Activated CD4-positive, alpha-beta T cell treated with anti-CD3 and anti-CD28 coated beads for 36 hours (primary cell): ENCODE measurements at regions of chr1 and their contacts with region 1.

Region 1: DNA sequence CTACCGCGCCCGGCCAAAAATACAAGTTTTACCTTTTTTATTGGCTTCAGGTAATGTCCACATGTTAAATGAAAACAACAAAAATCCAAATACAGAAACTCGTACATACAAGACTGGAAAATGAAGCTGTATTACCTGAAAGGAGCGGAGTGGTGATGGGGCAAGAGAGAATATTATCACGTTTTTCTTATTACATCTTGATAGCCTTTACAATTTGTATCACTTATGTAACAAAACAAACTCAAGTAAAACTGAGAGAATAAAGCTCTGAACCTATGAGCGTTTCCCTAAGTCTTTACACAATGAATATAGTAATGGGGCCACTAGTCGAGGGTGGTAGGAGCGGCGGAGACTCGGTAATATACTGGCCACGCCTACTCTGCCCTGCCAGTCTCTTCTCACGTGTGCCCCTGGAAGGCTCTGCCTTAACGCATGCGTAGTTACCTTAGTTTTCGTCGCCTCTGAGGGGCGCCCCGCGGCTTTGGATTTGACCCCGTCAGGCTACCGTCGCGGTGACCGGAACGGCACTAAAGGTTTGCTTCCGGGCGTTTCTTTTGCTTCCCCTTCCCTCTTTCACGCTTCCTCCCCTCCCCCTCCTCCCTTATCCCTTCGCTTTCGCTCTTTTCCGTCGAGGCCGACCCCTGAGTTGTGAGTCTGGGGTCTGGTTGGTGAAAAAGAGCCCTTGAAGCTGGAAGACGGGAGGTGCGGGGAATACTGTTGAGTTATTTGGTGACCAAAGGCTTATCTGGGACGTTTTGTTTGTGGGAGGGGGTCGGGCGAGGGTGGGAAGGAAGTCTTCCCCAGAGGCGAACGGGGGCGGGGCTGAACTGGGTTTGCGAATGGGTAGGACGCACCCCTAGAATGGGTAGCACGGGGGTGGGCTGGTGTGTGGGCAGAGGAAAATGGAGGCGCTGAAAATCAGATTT is at the start of gene SETDB1:
- DNase-seq: peak; percentile 97
- ATAC-seq: peak; percentile 89
- H3K4me3 Mint-ChIP-seq: peak within 1 kb of the TSS; percentile 89
- H3K27ac Mint-ChIP-seq: peak within 1 kb of the TSS; percentile 96
- H3K4me1 Mint-ChIP-seq: peaks cover 29% of the 10 kb centered on the region
- H3K27me3 Mint-ChIP-seq: no peaks in the 10 kb centered on the region
- total RNA-seq, gene SETDB1: 48.8 to 52.7 TPM

Region 2: GRCh38 chr1:150138044-150138443 is 788.0 kb before region 1 on chr1:
- CTCF ChIA-PET with region 1: no interaction called
- POLR2A ChIA-PET with region 1: no interaction called
- intact Hi-C with region 1: no loop called
- DNase-seq: no peak
- ATAC-seq: no peak
- H3K4me3 Mint-ChIP-seq: no peak overlapping the region
- H3K27ac Mint-ChIP-seq: no peak overlapping the region
- H3K4me1 Mint-ChIP-seq: peaks cover 3% of the 10 kb centered on the region
- H3K27me3 Mint-ChIP-seq: no peaks in the 10 kb centered on the region

Region 3: DNA sequence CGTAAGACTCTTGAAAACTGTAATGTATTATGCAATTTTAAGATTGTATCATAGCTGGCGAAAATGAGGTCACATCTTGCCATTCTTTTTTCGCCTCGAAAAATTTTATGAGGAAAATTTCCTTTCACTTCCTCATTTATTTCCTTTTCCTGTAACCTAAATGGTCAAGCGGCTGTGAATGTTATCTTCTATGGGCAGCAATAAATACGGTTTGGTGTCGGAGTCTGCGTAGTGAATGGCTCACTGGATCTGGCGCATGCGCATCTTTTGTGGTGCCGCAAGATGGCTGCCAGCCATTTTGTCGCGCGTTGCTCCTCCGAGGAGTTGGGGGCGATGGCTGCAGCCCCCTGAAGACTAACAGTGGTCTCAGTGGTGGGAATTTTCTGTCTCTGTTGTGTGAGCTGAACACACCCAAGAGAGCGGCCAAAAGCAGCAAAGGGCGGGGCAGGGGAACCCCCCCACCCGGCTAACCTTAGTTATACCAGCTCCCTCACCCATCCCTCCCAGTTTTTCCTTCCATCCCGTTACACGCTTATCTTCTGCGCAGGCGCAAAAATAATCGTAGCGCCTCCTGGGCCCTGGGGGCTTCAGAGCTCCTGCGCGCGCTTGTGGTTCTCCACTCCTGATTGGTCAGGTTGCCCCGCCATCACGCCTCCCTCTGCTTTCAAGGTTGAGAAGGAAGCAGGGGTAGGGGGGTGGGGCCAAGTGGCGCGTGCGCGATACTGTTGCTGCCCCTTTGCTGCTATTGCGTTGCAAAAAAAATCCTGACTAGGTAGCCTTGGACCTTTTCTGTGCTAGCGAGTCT is 562.5 kb before region 1 on chr1 and contains the start of gene RPRD2:
- CTCF ChIA-PET with region 1: no interaction called
- POLR2A ChIA-PET with region 1: no interaction called
- intact Hi-C with region 1: loop called in 1 of 2 experiments (anchors 2 kb)
- DNase-seq: peak; percentile 99
- ATAC-seq: peak; percentile 95
- H3K4me3 Mint-ChIP-seq: peak within 1 kb of the TSS; percentile 91
- H3K27ac Mint-ChIP-seq: peak within 1 kb of the TSS; percentile 99
- H3K4me1 Mint-ChIP-seq: peaks cover 13% of the 10 kb centered on the region
- H3K27me3 Mint-ChIP-seq: no peaks in the 10 kb centered on the region
- total RNA-seq, gene RPRD2: 24.4 to 32.2 TPM

Region 4: DNA sequence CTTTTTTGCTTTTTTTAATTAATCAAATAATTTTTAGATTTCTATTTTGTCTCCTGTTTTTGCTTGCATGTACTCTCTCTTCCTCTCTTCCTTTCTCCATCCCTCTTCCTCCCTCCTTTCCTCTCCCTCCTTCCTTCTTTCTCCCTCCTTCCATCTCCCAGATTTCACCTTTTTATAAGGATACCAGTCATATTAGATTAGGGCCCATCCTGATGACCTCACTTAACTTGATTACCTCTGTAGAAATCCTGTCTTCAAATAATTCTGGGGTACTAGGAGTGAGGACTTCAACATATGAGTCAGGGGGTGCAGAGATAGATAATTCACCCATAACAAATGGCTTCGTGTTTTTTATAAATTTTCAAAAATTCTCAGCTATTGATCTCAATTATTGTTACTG is 476.6 kb before region 1 on chr1:
- CTCF ChIA-PET with region 1: no interaction called
- POLR2A ChIA-PET with region 1: no interaction called
- intact Hi-C with region 1: no loop called
- DNase-seq: no peak
- ATAC-seq: no peak
- H3K4me3 Mint-ChIP-seq: no peak overlapping the region
- H3K27ac Mint-ChIP-seq: peak overlapping the region; percentile 69
- H3K4me1 Mint-ChIP-seq: peaks cover 5% of the 10 kb centered on the region
- H3K27me3 Mint-ChIP-seq: no peaks in the 10 kb centered on the region

Region 5: GRCh38 chr1:150629115-150629928 is 296.8 kb before region 1 on chr1 and contains the start of gene ENSA:
- CTCF ChIA-PET with region 1: interaction called, 3 read pairs
- POLR2A ChIA-PET with region 1: interaction called, 4 read pairs
- intact Hi-C with region 1: loop called (anchors 1 to 5 kb)
- DNase-seq: peak; percentile 97
- ATAC-seq: peak; percentile 89
- H3K4me3 Mint-ChIP-seq: no peak within 1 kb of the TSS
- H3K27ac Mint-ChIP-seq: no peak within 1 kb of the TSS
- H3K4me1 Mint-ChIP-seq: peaks cover 29% of the 10 kb centered on the region
- H3K27me3 Mint-ChIP-seq: no peaks in the 10 kb centered on the region
- total RNA-seq, gene ENSA: 197 to 240 TPM

Region 6: DNA sequence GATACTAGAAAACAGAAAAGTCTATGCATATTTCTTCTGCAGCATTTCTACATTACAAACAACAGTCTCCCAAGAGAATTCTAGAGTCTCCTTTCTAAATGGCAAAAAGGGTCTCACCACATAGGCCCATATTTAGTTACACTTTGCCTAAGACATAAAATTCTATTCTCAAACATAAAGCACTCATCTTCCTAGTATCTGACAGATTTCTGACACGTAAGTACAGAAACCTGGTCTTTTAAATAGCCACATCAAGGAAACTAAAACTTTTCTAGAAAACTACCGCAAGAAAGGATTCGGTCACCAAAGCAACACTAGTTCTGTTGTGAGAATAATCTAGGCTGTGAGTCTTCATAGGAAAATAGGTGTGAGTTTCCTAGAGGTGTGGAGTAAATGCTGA is 84.5 kb before region 1 on chr1:
- CTCF ChIA-PET with region 1: interaction called, 5 read pairs
- POLR2A ChIA-PET with region 1: no interaction called
- intact Hi-C with region 1: loop called (anchors 1 kb)
- DNase-seq: no peak
- ATAC-seq: peak; percentile 91
- H3K4me3 Mint-ChIP-seq: peak overlapping the region; percentile 2
- H3K27ac Mint-ChIP-seq: peak overlapping the region; percentile 21
- H3K4me1 Mint-ChIP-seq: peaks cover 33% of the 10 kb centered on the region
- H3K27me3 Mint-ChIP-seq: no peaks in the 10 kb centered on the region

Region 7: DNA sequence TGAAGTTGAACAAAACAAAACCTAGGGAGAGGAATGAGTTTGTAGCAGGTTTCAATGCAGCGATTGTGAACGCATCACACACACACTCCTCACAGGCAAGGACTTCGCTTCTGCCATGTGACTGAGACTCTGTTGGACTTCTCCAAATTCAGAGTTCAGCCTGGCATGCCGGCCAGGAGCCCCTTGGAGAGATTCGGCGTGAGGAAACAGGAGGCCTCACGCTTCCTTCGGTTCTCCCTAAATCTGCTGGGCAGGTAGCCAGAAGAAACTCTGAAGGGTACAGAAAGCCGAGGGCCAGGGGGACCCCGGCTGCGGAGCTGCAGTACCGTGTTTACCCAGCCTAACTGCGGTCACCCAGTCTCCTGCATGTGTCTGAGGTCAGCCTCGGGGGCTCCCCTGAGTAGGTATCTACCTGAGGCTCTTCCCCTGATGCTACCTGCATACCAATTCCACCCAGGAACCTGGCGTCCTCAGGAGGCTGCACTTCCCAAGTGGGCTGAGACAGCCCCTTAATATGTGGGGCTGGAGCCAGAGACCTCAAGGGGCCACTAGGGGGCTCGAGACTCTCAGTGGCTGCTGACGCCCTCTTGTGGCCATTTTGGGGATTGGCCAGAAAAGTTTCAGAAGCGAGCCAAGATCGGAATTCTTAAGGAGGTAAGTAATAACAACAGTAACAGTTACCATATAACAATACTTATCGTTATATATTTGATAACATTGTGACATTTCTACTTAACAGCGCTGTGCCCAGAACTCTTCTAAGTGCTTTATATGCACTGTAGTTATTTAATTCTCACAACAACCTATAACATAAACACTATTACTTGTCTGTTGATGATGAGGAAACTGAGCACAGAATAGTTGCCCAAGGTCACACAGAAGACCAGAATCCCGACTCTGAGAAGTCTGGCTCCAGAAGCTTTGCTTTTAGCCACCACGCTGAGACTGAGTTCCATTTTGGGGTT is 53.3 kb after region 1 on chr1:
- CTCF ChIA-PET with region 1: interaction called, 7 read pairs
- POLR2A ChIA-PET with region 1: no interaction called
- intact Hi-C with region 1: loop called in 1 of 2 experiments (anchors 1 kb)
- DNase-seq: peak; percentile 94
- ATAC-seq: peak; percentile 53
- H3K4me3 Mint-ChIP-seq: no peak overlapping the region
- H3K27ac Mint-ChIP-seq: peak overlapping the region; percentile 63
- H3K4me1 Mint-ChIP-seq: peaks cover 39% of the 10 kb centered on the region
- H3K27me3 Mint-ChIP-seq: no peaks in the 10 kb centered on the region

Region 8: GRCh38 chr1:151098126-151098525 is 172.0 kb after region 1 on chr1:
- CTCF ChIA-PET with region 1: no interaction called
- POLR2A ChIA-PET with region 1: no interaction called
- intact Hi-C with region 1: no loop called
- DNase-seq: no peak
- ATAC-seq: no peak
- H3K4me3 Mint-ChIP-seq: no peak overlapping the region
- H3K27ac Mint-ChIP-seq: no peak overlapping the region
- H3K4me1 Mint-ChIP-seq: no peaks in the 10 kb centered on the region
- H3K27me3 Mint-ChIP-seq: no peaks in the 10 kb centered on the region

Region 9: DNA sequence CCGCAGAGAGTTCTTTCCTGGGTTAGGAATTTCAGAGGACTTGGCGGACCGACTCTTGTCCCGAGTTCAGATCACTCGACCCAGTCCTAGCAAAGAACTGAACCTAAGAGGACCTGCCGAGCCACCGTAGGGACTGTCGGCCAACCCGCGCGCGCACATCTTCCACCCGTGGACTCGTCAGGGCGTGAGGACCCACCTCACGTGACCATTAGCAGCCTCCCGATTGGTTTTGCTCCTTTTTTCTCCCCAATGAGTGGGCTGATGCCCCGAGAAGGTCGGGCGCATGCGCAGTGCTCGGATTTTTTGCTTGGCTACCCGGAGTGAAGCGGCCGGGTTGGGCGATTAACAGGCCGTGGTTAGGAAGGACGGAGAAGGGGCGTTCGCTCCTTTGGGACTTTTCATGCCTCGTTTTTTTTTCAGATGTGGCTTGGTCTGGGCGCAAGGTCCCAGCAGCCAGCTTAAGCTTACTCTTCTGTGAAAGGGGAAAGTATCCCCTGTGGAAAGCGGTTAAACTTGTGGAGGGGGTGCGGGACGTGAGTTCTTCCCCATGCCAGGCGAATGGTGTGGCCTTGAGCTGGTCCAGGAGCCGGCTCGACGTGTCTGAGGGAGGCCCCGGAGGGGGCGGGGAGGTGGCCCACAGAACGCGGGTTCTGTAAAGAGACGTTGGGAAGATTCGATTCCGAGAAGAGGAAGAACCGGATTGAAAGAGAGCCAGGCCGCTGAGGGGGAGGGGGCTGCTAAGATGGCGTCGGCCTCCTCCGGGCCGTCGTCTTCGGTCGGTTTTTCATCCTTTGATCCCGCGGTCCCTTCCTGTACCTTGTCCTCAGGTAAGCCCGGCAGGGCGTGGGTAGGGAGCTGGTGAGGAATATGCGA is 272.4 kb after region 1 on chr1 and contains the start of gene PIP5K1A:
- CTCF ChIA-PET with region 1: no interaction called
- POLR2A ChIA-PET with region 1: no interaction called
- intact Hi-C with region 1: loop called in 1 of 2 experiments (anchors 1 kb)
- DNase-seq: peak; percentile 100
- ATAC-seq: peak; percentile 90
- H3K4me3 Mint-ChIP-seq: peak within 1 kb of the TSS; percentile 98
- H3K27ac Mint-ChIP-seq: peak within 1 kb of the TSS; percentile 100
- H3K4me1 Mint-ChIP-seq: peaks cover 38% of the 10 kb centered on the region
- H3K27me3 Mint-ChIP-seq: no peaks in the 10 kb centered on the region
- total RNA-seq, gene PIP5K1A: 74.5 to 85.1 TPM

Region 10: GRCh38 chr1:151526735-151527525 is 600.9 kb after region 1 on chr1:
- CTCF ChIA-PET with region 1: no interaction called
- POLR2A ChIA-PET with region 1: no interaction called
- intact Hi-C with region 1: no loop called
- DNase-seq: no peak
- ATAC-seq: no peak
- H3K4me3 Mint-ChIP-seq: no peak overlapping the region
- H3K27ac Mint-ChIP-seq: no peak overlapping the region
- H3K4me1 Mint-ChIP-seq: no peaks in the 10 kb centered on the region
- H3K27me3 Mint-ChIP-seq: no peaks in the 10 kb centered on the region